Calu3 (cell line): ENCODE measurements at regions of chr20 and their contacts with region 1.

Region 1: DNA sequence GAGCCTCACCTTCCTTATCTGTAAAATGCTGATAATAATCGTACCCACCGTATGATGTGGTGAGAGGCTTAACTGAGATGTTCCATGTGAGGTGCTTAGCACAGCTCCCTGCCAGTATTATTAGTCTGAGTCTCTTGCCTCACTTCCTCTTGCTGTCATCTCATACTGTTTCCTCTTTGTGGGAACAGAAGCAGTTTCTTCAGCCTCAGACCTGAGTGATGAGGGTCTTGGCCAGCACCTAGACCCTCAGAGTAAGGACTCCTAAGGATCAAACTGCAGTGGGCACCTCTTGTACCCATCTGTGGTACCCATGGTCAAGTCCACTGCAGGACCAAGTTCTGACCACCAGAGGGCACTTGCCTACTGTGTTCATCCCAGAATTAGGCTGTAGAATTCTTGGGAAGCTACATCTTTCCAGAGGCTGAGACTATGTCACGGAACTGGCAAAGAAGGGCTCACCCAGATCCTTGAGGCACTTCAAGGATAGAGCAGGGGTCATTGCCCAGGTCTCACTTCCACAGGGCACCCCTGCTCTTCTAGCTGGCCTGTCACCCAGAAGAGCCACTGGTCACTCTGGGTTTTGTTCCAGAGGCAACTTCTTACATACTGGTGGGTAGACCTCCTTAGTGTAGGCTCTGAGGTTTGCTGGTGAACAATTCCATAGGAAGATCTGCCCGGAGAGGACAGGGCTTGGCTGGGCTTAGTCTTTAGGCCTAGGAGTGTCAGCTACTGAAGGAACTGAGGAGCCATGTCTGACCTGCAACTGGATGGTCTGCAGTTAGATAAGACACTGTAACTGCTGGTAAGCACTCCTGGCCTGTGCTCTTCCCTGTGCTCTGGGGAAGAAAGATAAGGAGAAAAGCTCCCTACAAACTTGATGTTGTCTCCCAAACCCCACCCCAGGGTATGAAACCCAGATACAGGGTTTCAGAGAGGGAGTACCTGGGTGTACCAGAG is 20.6 kb upstream of the SGK2 start:
- DNase-seq: peak; percentile 82
- H3K4me3 Mint-ChIP-seq: no peak overlapping the region
- H3K27ac Mint-ChIP-seq: no peak overlapping the region
- H3K4me1 Mint-ChIP-seq: no peaks in the 10 kb centered on the region
- H3K27me3 Mint-ChIP-seq: no peaks in the 10 kb centered on the region
- CTCF ChIP-seq: peak; percentile 97

Region 2: GRCh38 chr20:43558412-43559146 is 20.4 kb after region 1 on chr20 and contains the start of gene SGK2:
- CTCF ChIA-PET with region 1: interaction called, 23 read pairs
- intact Hi-C with region 1: loop called (anchors 1 kb)
- DNase-seq: peak; percentile 90
- H3K4me3 Mint-ChIP-seq: peak within 1 kb of the TSS; percentile 73
- H3K27ac Mint-ChIP-seq: peak within 1 kb of the TSS; percentile 70
- H3K4me1 Mint-ChIP-seq: peaks cover 55% of the 10 kb centered on the region
- H3K27me3 Mint-ChIP-seq: no peaks in the 10 kb centered on the region
- CTCF ChIP-seq: no peak
- total RNA-seq, gene SGK2: 45.6 and 46.5 TPM in 2 replicates

Region 3: DNA sequence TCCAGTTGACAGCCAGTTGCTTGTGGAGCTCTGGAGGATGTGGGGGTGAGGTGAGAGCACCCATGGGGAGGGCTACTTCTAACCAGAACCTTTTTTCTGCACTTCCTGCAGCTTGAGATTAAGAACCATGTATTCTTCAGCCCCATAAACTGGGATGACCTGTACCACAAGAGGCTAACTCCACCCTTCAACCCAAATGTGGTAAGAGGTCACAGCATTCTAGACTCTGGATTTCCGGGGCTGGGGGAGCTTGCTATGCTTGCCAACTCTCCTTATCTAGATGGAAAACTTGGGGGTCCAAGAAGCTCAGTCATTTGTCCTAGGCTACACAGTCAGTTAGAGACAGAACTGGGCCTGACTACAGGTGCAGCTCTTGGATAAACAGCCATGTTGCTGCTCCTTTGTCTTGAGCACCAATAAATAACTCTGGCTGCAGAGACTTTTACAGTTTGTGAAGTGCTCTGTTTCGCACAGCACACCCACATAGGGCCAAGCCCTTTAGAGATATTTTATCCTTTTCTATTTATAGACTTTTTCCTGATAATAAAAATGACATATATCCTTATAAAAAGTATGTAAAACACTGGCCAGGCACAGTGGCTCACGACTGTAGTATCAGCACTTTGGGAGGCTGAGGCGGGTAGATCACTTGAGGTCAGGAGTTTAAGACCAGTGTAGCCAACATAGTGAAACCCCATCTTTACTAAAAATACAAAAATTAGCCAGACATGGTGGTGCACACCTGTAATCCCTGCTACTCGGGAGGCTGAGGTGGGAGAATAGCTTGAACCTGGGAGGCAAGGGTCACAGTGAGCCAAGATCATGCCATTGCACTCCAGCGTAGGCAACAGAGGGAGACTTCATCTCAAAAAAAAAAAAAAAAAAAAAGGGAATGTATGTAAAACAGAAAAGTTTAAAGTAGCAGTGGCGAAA is 41.9 kb after region 1 on chr20:
- CTCF ChIA-PET with region 1: interaction called, 10 read pairs
- intact Hi-C with region 1: no loop called
- DNase-seq: no peak
- H3K4me3 Mint-ChIP-seq: no peak overlapping the region
- H3K27ac Mint-ChIP-seq: no peak overlapping the region
- H3K4me1 Mint-ChIP-seq: peaks cover 15% of the 10 kb centered on the region
- H3K27me3 Mint-ChIP-seq: no peaks in the 10 kb centered on the region
- CTCF ChIP-seq: no peak

Region 4: GRCh38 chr20:43590392-43591323 is 52.5 kb after region 1 on chr20 and contains the start of gene IFT52:
- CTCF ChIA-PET with region 1: interaction called, 16 read pairs
- intact Hi-C with region 1: loop called (anchors 1 kb)
- DNase-seq: peak; percentile 97
- H3K4me3 Mint-ChIP-seq: peak within 1 kb of the TSS; percentile 99
- H3K27ac Mint-ChIP-seq: peak within 1 kb of the TSS; percentile 81
- H3K4me1 Mint-ChIP-seq: peaks cover 21% of the 10 kb centered on the region
- H3K27me3 Mint-ChIP-seq: no peaks in the 10 kb centered on the region
- CTCF ChIP-seq: no peak
- total RNA-seq, gene IFT52: 30.2 and 30.8 TPM in 2 replicates

Region 5: DNA sequence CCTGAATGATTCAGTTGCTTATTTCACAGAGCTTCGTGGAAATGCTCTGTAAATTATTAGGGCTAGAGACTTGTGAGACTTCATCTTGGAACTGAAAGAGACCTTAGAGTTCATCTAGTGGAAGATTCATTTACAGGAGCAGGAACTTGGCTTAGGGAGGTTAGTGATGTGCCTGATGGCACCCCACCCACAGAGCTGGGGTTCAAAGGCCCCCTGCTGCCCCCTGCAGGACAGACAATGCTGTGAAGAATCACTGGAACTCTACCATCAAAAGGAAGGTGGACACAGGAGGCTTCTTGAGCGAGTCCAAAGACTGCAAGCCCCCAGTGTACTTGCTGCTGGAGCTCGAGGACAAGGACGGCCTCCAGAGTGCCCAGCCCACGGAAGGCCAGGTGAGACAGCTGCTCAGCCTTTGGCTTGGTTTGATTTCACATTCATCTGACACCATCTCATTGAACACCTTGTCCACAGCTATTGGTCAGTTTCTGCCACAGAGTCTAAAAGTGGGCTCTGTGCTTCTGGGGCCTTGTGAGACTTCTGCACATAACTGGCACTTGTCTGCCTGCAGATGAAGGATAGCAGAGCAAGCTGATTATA is 153.8 kb after region 1 on chr20:
- CTCF ChIA-PET with region 1: interaction called, 23 read pairs
- intact Hi-C with region 1: loop called (anchors 1 kb)
- DNase-seq: peak; percentile 83
- H3K4me3 Mint-ChIP-seq: no peak overlapping the region
- H3K27ac Mint-ChIP-seq: no peak overlapping the region
- H3K4me1 Mint-ChIP-seq: no peaks in the 10 kb centered on the region
- H3K27me3 Mint-ChIP-seq: no peaks in the 10 kb centered on the region
- CTCF ChIP-seq: peak; percentile 85

Region 6: DNA sequence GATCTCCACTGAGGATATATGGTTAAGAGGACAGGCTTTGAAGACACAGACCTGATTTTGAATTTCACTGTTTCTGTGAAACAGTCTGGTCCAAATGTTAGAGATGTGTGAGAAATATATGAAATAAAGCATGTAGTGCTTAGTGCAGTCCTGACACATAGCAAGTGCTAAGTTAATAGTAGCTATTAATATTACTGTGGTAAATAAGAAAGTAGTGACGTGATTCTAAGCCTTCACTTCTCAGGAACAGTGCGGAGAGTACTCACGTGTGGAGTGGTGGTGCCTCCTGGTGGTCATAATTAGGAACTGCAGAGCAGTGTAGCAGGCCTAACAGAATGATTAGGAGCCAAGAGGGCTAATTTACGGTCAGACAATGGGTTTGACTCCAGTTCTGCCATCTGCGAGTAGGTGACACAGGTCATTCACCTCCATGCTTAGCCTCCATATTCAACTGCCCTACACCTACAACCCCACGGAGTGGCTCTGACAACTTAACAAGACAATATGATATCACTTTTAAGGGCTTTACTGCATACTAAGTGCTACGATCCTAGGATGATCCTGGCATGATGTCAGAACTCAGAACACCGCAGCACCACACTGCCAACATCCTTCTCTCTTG is 542.6 kb after region 1 on chr20:
- CTCF ChIA-PET with region 1: no interaction called
- intact Hi-C with region 1: loop called (anchors 5 kb)
- DNase-seq: peak; percentile 86
- H3K4me3 Mint-ChIP-seq: no peak overlapping the region
- H3K27ac Mint-ChIP-seq: no peak overlapping the region
- H3K4me1 Mint-ChIP-seq: peaks cover 7% of the 10 kb centered on the region
- H3K27me3 Mint-ChIP-seq: peaks cover 41% of the 10 kb centered on the region
- CTCF ChIP-seq: peak; percentile 98